PC-9 (cell line): ENCODE measurements at regions of chr18 and their contacts with region 1.

Region 1: GRCh38 chr18:37537868-37538525 is 27.6 kb downstream of the CELF4 start:
- DNase-seq: peak in 1 of 2 experiments; percentile 56
- H3K4me3 ChIP-seq: no peak overlapping the region
- H3K27ac ChIP-seq: no peak overlapping the region
- H3K4me1 ChIP-seq: no peaks in the 10 kb centered on the region
- H3K27me3 ChIP-seq: peaks cover 66% of the 10 kb centered on the region
- CTCF ChIP-seq: peak; percentile 77

Region 2: GRCh38 chr18:37019157-37019827 is 518.7 kb before region 1 on chr18:
- CTCF ChIA-PET with region 1: no interaction called
- POLR2A ChIA-PET with region 1: no interaction called
- intact Hi-C with region 1: loop called (anchors 5 kb)
- DNase-seq: peak; percentile 22 to 61
- H3K4me3 ChIP-seq: no peak overlapping the region
- H3K27ac ChIP-seq: no peak overlapping the region
- H3K4me1 ChIP-seq: no peaks in the 10 kb centered on the region
- H3K27me3 ChIP-seq: no peaks in the 10 kb centered on the region
- CTCF ChIP-seq: peak; percentile 62

Region 3: GRCh38 chr18:37385846-37386778 is 151.9 kb before region 1 on chr18:
- CTCF ChIA-PET with region 1: no interaction called
- POLR2A ChIA-PET with region 1: no interaction called
- intact Hi-C with region 1: loop called (anchors 1 kb)
- DNase-seq: no peak
- H3K4me3 ChIP-seq: no peak overlapping the region
- H3K27ac ChIP-seq: no peak overlapping the region
- H3K4me1 ChIP-seq: no peaks in the 10 kb centered on the region
- H3K27me3 ChIP-seq: no peaks in the 10 kb centered on the region
- CTCF ChIP-seq: peak; percentile 77